AG04450 (cell line): ENCODE measurements at regions of chr5 and their contacts with region 1.

Region 1: DNA sequence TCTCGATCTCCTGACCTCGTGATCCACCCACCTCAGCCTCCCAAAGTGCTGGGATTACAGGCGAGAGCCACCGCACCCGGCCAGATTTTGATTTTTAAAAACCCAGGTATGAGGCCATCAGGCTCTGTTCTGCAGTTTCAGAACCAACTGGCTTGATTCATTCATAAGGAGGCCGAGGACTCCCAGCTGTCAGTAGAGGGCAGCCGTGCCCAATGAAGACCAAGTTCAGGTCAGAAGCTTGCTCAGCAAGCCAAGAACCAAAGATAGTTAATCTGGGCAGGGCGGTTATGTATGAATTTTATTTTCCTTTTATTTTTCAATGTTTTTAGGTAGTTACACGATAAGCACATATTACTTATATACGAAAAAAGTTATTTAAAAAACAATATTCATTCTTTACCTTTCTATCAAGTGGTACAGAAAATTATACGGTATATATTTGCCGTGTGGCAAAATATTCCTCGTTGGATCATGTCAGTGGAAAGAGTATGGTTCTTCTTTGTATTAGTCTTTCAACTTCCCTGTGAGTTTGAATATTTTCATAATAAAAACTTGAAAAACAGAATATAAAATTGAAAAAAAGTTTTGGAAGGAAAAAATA is 18.0 kb downstream of the MGAT1 start:
- DNase-seq: peak; percentile 66
- H3K4me3 ChIP-seq: no peak overlapping the region
- H3K27ac ChIP-seq: no peak overlapping the region
- H3K27me3 ChIP-seq: no peaks in the 10 kb centered on the region
- CTCF ChIP-seq: peak; percentile 79

Region 2: DNA sequence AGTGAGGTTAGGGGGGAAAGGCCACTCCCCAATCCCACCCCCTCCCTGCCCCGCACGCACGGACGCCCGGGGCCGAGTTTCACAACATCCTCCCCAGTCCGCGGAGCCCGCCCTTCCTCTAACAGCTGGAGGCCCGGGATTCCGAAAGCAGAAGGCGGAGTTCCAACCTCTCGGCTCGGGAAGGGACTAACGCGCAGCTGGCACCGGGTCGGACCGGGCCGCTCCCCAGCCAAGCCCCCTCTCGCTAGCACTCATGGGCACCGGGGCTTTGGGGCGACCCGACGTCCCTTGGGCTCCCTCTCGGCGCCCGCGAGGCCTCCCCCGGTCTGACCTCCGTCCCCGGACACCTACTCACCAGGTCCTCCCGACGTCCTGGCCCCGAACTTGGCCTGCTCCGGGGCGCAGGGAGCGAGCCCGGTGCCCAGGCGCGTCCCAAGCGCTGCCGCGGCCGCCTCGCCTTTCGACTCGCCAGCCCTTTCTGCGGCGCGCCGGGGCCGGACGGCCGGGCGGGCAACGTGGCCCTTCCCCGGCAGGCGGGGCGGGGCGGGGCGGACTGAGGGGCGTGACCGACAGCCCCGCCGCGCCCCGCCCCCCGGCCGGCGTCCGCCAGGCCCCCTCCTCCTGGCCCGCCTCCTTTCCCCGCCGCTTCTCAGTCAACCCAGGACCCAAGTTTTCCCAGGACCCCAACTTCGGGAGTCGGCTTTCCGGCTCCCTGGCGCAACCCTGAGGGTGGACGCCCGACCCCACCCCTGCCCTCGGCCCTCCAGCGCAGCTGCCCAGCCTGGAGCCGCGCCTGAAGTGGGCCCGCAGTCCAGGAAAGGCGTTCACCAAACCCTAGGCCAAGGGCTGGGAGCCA is 18.0 kb after region 1 on chr5 and contains the start of gene MGAT1:
- CTCF ChIA-PET with region 1: interaction called, 8 read pairs
- POLR2A ChIA-PET with region 1: interaction called, 20 read pairs
- DNase-seq: no peak
- H3K4me3 ChIP-seq: peak within 1 kb of the TSS; percentile 95
- H3K27ac ChIP-seq: peak within 1 kb of the TSS; percentile 97
- H3K27me3 ChIP-seq: no peaks in the 10 kb centered on the region
- CTCF ChIP-seq: no peak
- polyA plus RNA-seq, gene MGAT1: 96.2 and 121 TPM in 2 replicates

Region 3: GRCh38 chr5:180868960-180869359 is 84.4 kb after region 1 on chr5:
- CTCF ChIA-PET with region 1: interaction called, 14 read pairs
- POLR2A ChIA-PET with region 1: no interaction called
- DNase-seq: peak; percentile 39
- H3K4me3 ChIP-seq: no peak overlapping the region
- H3K27ac ChIP-seq: no peak overlapping the region
- H3K27me3 ChIP-seq: peaks cover 2% of the 10 kb centered on the region
- CTCF ChIP-seq: peak; percentile 93

Region 4: DNA sequence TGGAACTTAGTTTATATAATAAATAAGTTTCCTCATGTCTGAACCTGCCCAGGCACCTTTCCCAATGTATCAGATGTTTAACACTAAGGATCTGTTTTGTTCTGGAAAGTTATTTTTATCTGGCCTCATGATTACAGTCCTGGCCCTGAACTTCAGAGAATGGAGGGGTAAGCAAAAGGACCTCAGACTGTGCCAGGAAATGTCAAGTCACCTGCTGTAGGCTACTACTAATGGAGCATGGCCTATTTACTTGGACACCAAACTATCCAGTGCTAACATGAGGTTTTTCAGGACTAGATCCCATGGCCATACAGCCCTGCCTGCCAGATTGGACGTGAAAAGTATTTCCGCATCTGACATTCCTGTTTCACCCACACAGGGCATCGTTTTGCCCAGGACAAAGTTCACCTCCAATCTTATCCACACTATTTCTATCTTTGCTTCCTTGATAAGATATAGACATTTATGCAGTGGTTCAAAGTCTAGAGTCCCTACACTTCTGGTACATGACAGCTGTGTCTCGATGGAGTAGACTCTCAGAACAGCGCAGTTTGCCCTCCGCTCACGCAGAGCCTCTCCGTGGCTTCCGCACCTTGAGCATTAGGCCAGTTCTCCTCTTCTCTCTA is 114.1 kb after region 1 on chr5 and contains the start of gene BTNL8:
- CTCF ChIA-PET with region 1: no interaction called
- POLR2A ChIA-PET with region 1: no interaction called
- DNase-seq: no peak
- H3K4me3 ChIP-seq: no peak within 1 kb of the TSS
- H3K27ac ChIP-seq: no peak within 1 kb of the TSS
- H3K27me3 ChIP-seq: no peaks in the 10 kb centered on the region
- CTCF ChIP-seq: no peak
- polyA plus RNA-seq, gene BTNL8: not detected in 2 replicates